Mammary epithelial cell (primary cell): ENCODE measurements at regions of chr7 and their contacts with region 1.

Region 1: DNA sequence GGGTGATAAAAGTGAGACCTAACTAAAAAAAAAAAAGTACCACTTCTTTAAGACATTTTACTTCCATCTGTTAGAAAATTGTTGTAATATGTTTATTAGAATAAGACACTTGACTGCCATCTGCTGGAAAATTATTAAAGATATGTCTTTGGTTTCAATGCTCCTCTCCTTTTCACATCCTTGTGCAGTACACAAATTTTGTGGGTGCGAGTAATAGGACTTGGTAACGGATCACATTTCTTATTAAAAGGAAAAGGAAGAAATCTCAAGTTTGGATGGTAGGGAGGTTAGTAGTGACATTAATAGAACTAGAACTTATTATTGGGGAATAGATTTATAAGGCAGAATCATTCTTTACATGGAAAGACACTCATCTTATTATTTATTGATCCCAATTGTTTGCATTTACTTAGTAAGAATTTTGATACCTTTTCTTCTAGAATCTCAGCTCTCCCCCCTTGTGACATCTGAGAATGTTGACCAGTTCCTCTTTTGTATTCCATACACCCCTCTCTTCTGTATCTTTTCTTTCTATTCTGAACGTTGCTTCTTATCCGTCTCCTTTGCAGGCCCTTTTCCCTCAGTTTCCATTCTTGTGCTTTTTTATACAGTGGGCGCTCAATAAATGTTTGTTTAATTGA is 43.1 kb upstream of the RPA3 start:
- DNase-seq: peak; percentile 50
- H3K4me3 ChIP-seq: peak overlapping the region in 1 of 3 experiments; percentile 56
- H3K27ac ChIP-seq: peak overlapping the region; percentile 54
- H3K4me1 ChIP-seq: peaks cover 24% of the 10 kb centered on the region
- H3K27me3 ChIP-seq: no peaks in the 10 kb centered on the region
- CTCF ChIP-seq: peak in 1 of 2 donors; percentile 47

Region 2: GRCh38 chr7:7566651-7567611 is 194.5 kb before region 1 on chr7 and contains the start of gene MIOS:
- CTCF ChIA-PET with region 1: no interaction called
- dilution Hi-C with region 1: no loop called
- in situ Hi-C with region 1: no loop called
- intact Hi-C with region 1: loop called (anchors 10 kb)
- DNase-seq: peak; percentile 73
- H3K4me3 ChIP-seq: peak within 1 kb of the TSS; percentile 54 to 85 (median 70)
- H3K27ac ChIP-seq: peak within 1 kb of the TSS; percentile 69
- H3K4me1 ChIP-seq: peaks cover 39% of the 10 kb centered on the region
- H3K27me3 ChIP-seq: no peaks in the 10 kb centered on the region
- CTCF ChIP-seq: no peak
- total RNA-seq, gene MIOS: 27.5 to 36.8 TPM

Region 3: DNA sequence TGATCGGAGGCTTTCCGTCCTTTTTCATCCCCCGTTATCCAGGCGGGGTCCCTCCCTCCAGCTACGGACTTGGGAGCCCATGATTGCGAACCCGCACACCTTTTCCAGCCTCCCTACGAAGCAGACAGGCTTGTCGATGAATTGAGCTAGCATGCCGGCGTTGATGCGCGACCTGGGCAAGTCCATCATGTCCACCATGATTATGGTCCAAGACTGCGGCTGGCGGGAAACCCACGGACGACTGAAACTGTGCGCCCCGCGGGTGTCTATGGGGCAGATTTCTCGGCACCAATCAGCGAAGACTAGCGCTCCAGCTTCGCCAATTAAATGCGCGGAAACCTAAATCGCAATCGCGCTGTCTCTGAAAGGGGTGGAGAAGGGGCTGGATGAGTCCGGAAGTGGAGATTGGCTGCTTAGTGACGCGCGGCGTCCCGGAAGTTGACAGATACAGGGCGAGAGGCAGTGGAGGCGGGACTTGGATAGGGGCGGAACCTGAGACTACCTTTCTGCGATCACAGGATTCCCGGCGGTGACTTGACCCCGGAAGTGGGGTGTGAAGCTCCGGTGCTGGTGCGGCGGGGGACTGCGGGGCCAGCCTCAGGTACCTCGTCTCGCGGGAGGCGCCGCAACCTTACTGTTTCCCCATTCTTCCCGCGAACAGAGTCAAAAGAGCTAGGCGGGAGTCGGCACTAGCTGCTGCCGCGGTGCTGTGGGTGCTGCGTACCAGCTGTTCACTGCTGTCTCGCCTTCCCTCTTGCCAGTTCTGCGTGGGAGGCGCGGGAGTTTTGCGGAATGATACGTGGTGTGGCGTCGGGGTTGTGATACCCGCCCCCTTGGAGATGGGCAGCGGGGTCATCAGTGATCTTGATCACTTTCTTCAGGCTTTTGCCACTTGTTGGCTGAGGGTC is 121.0 kb before region 1 on chr7 and contains the start of gene UMAD1:
- CTCF ChIA-PET with region 1: no interaction called
- dilution Hi-C with region 1: no loop called
- in situ Hi-C with region 1: no loop called
- intact Hi-C with region 1: loop called (anchors 2 kb)
- DNase-seq: peak; percentile 100
- H3K4me3 ChIP-seq: peak within 1 kb of the TSS; percentile 83 to 97 (median 96)
- H3K27ac ChIP-seq: peak within 1 kb of the TSS; percentile 94
- H3K4me1 ChIP-seq: peaks cover 7% of the 10 kb centered on the region
- H3K27me3 ChIP-seq: no peaks in the 10 kb centered on the region
- CTCF ChIP-seq: no peak
- total RNA-seq, gene UMAD1: 12.0 to 12.7 TPM

Region 4: GRCh38 chr7:7662527-7662926 is 98.9 kb before region 1 on chr7:
- CTCF ChIA-PET with region 1: no interaction called
- dilution Hi-C with region 1: no loop called
- in situ Hi-C with region 1: no loop called
- intact Hi-C with region 1: no loop called
- DNase-seq: no peak
- H3K4me3 ChIP-seq: no peak overlapping the region
- H3K27ac ChIP-seq: no peak overlapping the region
- H3K4me1 ChIP-seq: no peaks in the 10 kb centered on the region
- H3K27me3 ChIP-seq: no peaks in the 10 kb centered on the region
- CTCF ChIP-seq: peak; percentile 2 to 29

Region 5: GRCh38 chr7:7686811-7687508 is 74.5 kb before region 1 on chr7:
- CTCF ChIA-PET with region 1: no interaction called
- dilution Hi-C with region 1: no loop called
- in situ Hi-C with region 1: loop called (anchors 5 to 10 kb)
- intact Hi-C with region 1: no loop called
- DNase-seq: no peak
- H3K4me3 ChIP-seq: no peak overlapping the region
- H3K27ac ChIP-seq: no peak overlapping the region
- H3K4me1 ChIP-seq: peaks cover under 1% of the 10 kb centered on the region
- H3K27me3 ChIP-seq: no peaks in the 10 kb centered on the region
- CTCF ChIP-seq: no peak

Region 6: DNA sequence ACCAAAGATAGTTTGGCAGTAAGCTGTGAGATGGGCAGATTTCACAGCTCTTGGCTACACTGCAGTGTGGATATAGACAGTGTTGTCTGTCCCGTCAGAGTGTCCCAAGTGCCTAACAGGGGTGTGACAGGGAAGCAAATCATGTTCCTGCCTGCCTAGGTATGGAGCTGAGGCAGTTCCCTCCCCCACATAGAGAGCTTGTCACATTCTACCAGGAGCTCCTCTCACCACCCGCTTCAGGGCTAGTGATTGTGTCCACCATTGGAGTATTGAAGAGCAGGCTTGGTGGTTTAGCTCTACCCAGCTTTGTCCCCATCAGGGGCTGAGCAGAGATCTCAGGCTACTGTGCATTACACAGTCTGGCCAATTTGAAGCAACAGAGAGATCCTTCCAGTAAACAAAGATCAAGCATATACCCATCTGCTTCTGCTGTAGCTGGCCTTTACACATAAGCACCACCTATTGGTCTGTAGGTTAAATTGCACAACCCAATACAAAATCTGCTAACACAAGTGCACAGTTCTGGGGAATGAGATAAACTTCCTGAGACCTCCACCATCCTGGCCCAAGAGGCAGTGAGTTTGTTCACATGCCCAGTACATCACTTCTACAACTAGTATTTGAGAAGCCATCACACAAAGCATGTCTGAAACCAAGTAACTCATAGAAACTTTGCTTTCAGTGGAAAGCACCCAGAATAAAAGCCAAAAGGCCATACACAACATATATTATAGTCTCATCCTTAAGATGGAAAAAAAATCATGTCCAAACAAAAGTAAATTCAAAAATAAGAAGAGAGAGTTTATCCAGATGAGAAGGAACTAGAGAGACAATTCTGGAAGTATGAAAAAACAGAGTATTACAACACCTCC is 274.4 kb after region 1 on chr7:
- CTCF ChIA-PET with region 1: no interaction called
- dilution Hi-C with region 1: no loop called
- in situ Hi-C with region 1: no loop called
- intact Hi-C with region 1: loop called (anchors 2 kb)
- DNase-seq: peak; percentile 37
- H3K4me3 ChIP-seq: no peak overlapping the region
- H3K27ac ChIP-seq: no peak overlapping the region
- H3K4me1 ChIP-seq: peaks cover 5% of the 10 kb centered on the region
- H3K27me3 ChIP-seq: no peaks in the 10 kb centered on the region
- CTCF ChIP-seq: peak; percentile 54 to 65

Region 7: GRCh38 chr7:8190119-8190895 is 428.8 kb after region 1 on chr7:
- CTCF ChIA-PET with region 1: no interaction called
- dilution Hi-C with region 1: no loop called
- in situ Hi-C with region 1: no loop called
- intact Hi-C with region 1: loop called (anchors 5 kb)
- DNase-seq: peak; percentile 41
- H3K4me3 ChIP-seq: no peak overlapping the region
- H3K27ac ChIP-seq: no peak overlapping the region
- H3K4me1 ChIP-seq: no peaks in the 10 kb centered on the region
- H3K27me3 ChIP-seq: no peaks in the 10 kb centered on the region
- CTCF ChIP-seq: peak; percentile 67 to 75

Region 8: DNA sequence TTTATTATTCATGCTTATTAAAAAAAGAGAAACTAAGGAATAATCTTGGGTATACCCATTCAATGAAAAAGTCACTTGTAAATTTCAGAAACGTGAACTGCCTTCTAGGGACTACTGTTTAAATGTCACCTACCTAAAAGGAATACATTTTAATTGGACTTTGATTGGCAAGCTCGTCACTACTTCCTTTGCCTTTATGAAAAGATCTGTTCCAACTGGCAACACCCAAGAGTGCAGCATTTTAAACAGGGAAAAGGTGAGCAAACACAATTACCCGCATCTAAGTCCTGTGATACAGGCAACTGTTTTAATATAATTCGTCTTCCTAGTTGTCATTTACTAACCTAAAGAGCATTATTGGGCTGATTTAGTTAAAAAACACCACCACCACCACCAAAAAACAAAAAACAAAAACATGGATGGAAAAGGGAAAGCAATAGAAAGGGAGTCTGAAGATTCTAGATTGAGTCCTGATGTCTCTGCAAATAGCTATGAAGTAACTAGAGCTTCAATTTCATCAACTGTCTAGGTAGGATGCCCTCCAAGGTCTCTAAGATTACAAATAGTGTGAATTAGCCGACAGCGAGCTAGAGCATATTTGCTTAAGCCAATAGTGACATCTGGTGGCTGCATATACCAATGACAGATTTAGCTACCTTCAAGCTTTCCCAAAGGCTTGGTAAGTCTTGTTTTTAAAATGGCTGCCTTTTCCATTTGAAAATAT is 534.3 kb after region 1 on chr7:
- CTCF ChIA-PET with region 1: no interaction called
- dilution Hi-C with region 1: no loop called
- in situ Hi-C with region 1: no loop called
- intact Hi-C with region 1: loop called (anchors 2 kb)
- DNase-seq: peak; percentile 70
- H3K4me3 ChIP-seq: no peak overlapping the region
- H3K27ac ChIP-seq: no peak overlapping the region
- H3K4me1 ChIP-seq: no peaks in the 10 kb centered on the region
- H3K27me3 ChIP-seq: no peaks in the 10 kb centered on the region
- CTCF ChIP-seq: peak; percentile 79 to 81